Naive thymus-derived CD4-positive, alpha-beta T cell (primary cell): ENCODE measurements at regions of chr2 and their contacts with region 1.

Region 1: GRCh38 chr2:99141110-99142108 is at the start of gene C2orf15:
- DNase-seq: peak; percentile 89 to 98 (median 96)
- ATAC-seq: peak; percentile 95
- H3K4me3 ChIP-seq: peak within 1 kb of the TSS; percentile 97
- H3K4me3 Mint-ChIP-seq: peak within 1 kb of the TSS; percentile 90 to 99 (median 97)
- H3K27ac ChIP-seq: peak within 1 kb of the TSS; percentile 82
- H3K27ac Mint-ChIP-seq: peak within 1 kb of the TSS; percentile 92 to 99 (median 98)
- H3K4me1 ChIP-seq: peaks cover 13% of the 10 kb centered on the region in 2 donors
- H3K4me1 Mint-ChIP-seq: peaks cover 0 to 31% (median 25%) of the 10 kb centered on the region in 7 donors
- H3K27me3 ChIP-seq: no peaks in the 10 kb centered on the region
- H3K27me3 Mint-ChIP-seq: peaks cover 0 to 41% (median 0%) of the 10 kb centered on the region in 5 donors
- total RNA-seq, gene C2orf15: 0.48 to 3.8 (median 3.1) TPM

Region 2: DNA sequence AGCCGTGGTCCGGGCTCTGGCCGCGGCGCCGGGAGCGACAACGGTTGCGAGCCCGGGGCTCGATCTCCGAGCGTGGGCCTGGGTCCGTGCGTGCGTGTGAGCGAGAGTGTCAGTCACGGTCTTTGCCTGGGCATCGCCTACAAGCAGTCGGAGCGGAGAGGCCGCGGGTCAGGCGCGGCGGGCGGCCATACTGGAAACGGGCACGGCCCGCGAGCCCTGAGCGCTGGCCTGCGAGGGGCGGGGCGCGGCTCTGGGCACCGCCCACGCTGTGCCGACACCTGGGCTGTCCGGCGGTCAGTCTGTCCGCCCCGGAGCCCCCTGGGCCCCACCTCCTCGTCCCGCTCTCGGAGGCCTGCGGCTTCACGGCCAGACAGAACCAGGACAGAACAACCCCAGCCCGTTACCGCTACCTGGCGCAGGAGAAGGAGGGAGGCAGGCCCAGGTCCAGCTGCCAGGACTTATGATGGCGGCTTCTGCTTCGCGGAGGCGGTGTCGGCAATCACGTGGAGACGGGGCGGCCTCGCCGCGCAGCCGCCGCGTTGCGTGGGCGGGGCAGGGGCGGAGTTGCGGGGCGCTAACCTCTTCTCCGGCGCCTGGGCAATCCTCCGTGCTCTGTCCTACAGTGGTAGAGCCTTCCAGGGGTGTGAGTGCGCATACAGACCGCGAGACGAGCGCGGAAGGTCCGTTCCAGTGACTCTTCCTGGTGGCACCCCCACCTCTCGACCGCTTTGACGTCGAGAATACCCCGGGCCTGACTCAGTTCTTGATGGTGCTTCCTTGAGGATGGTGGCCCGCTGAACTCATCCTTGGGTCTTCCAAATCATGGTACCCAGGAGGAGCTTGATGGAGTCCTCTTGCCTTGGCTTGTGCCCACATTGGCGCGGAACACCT is 1145.4 kb before region 1 on chr2 and contains the start of gene TMEM131:
- CTCF ChIA-PET with region 1: no interaction called
- POLR2A ChIA-PET with region 1: no interaction called
- intact Hi-C with region 1: loop called in 1 of 2 experiments (anchors 1 kb)
- DNase-seq: peak; percentile 89 to 98 (median 95)
- ATAC-seq: peak; percentile 93
- H3K4me3 ChIP-seq: peak within 1 kb of the TSS; percentile 90
- H3K4me3 Mint-ChIP-seq: peak within 1 kb of the TSS; percentile 85 to 98 (median 96)
- H3K27ac ChIP-seq: peak within 1 kb of the TSS; percentile 96
- H3K27ac Mint-ChIP-seq: peak within 1 kb of the TSS; percentile 86 to 95 (median 93)
- H3K4me1 ChIP-seq: peaks cover 14 to 17% of the 10 kb centered on the region in 2 donors
- H3K4me1 Mint-ChIP-seq: peaks cover 20 to 40% (median 38%) of the 10 kb centered on the region in 7 donors
- H3K27me3 ChIP-seq: no peaks in the 10 kb centered on the region
- H3K27me3 Mint-ChIP-seq: peaks cover 0 to 4% (median 0%) of the 10 kb centered on the region in 5 donors
- total RNA-seq, gene TMEM131: 39.7 to 46.4 (median 43.6) TPM

Region 3: GRCh38 chr2:98608116-98608999 is 533.1 kb before region 1 on chr2 and contains the starts of genes COA5 and UNC50:
- CTCF ChIA-PET with region 1: no interaction called
- POLR2A ChIA-PET with region 1: no interaction called
- intact Hi-C with region 1: loop called in 1 of 2 experiments (anchors 10 kb)
- DNase-seq: peak; percentile 82 to 94 (median 87)
- ATAC-seq: peak; percentile 93
- H3K4me3 ChIP-seq: peak within 1 kb of the TSS; percentile 94
- H3K4me3 Mint-ChIP-seq: peak within 1 kb of the TSS; percentile 82 to 97 (median 90)
- H3K27ac ChIP-seq: peak within 1 kb of the TSS; percentile 97
- H3K27ac Mint-ChIP-seq: peak within 1 kb of the TSS; percentile 81 to 97 (median 92)
- H3K4me1 ChIP-seq: peaks cover 39 to 48% of the 10 kb centered on the region in 2 donors
- H3K4me1 Mint-ChIP-seq: peaks cover 51 to 82% (median 70%) of the 10 kb centered on the region in 7 donors
- H3K27me3 ChIP-seq: no peaks in the 10 kb centered on the region
- H3K27me3 Mint-ChIP-seq: no peaks in the 10 kb centered on the region
- total RNA-seq, gene COA5: 23.8 to 55.2 (median 29.2) TPM
- total RNA-seq, gene UNC50: 22.2 to 41.3 (median 29.9) TPM

Region 4: DNA sequence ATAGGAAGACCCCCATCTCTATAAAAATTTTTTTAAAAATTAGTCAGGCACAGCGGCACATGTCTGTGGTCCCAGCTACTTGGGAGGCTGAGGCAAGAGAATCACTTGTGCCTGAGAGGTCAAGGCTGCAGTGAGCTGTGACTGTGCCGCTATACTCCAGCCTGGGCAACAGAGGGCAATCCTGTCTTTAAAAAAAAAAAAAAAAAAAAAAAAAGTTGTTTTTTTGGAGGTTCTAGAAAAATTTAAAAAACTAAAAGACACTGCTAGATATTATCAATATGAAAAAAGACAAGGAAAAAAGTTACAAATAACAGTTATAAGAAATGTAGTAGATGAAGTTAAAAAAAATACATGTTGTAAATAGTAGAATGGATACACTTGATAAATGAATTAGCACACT is 56.0 kb before region 1 on chr2:
- CTCF ChIA-PET with region 1: interaction called, 3 read pairs
- POLR2A ChIA-PET with region 1: no interaction called
- intact Hi-C with region 1: loop called in 1 of 2 experiments (anchors 5 kb)
- DNase-seq: peak in 4 of 9 donors; percentile 1 to 7 (median 4)
- ATAC-seq: no peak
- H3K4me3 ChIP-seq: no peak overlapping the region
- H3K4me3 Mint-ChIP-seq: no peak overlapping the region
- H3K27ac ChIP-seq: no peak overlapping the region
- H3K27ac Mint-ChIP-seq: no peak overlapping the region
- H3K4me1 ChIP-seq: peaks cover 0 to 7% of the 10 kb centered on the region in 2 donors
- H3K4me1 Mint-ChIP-seq: peaks cover 0 to 6% (median 4%) of the 10 kb centered on the region in 7 donors
- H3K27me3 ChIP-seq: no peaks in the 10 kb centered on the region
- H3K27me3 Mint-ChIP-seq: peaks cover 0 to 28% (median 6%) of the 10 kb centered on the region in 5 donors

Region 5: GRCh38 chr2:99101697-99102096 is 39.7 kb before region 1 on chr2:
- CTCF ChIA-PET with region 1: no interaction called
- POLR2A ChIA-PET with region 1: no interaction called
- intact Hi-C with region 1: loop called in 1 of 2 experiments (anchors 5 kb)
- DNase-seq: no peak
- ATAC-seq: no peak
- H3K4me3 ChIP-seq: no peak overlapping the region
- H3K4me3 Mint-ChIP-seq: no peak overlapping the region
- H3K27ac ChIP-seq: no peak overlapping the region
- H3K27ac Mint-ChIP-seq: peak overlapping the region in 7 of 9 donors; percentile 5 to 63 (median 38)
- H3K4me1 ChIP-seq: no peaks in the 10 kb centered on the region
- H3K4me1 Mint-ChIP-seq: peaks cover 0 to 9% (median 8%) of the 10 kb centered on the region in 7 donors
- H3K27me3 ChIP-seq: no peaks in the 10 kb centered on the region
- H3K27me3 Mint-ChIP-seq: no peaks in the 10 kb centered on the region

Region 6: GRCh38 chr2:99112617-99113016 is 28.8 kb before region 1 on chr2:
- CTCF ChIA-PET with region 1: no interaction called
- POLR2A ChIA-PET with region 1: no interaction called
- intact Hi-C with region 1: loop called in 1 of 2 experiments (anchors 2 kb)
- DNase-seq: no peak
- ATAC-seq: no peak
- H3K4me3 ChIP-seq: no peak overlapping the region
- H3K4me3 Mint-ChIP-seq: no peak overlapping the region
- H3K27ac ChIP-seq: no peak overlapping the region
- H3K27ac Mint-ChIP-seq: no peak overlapping the region
- H3K4me1 ChIP-seq: no peaks in the 10 kb centered on the region
- H3K4me1 Mint-ChIP-seq: no peaks in the 10 kb centered on the region
- H3K27me3 ChIP-seq: no peaks in the 10 kb centered on the region
- H3K27me3 Mint-ChIP-seq: peaks cover 0 to 2% (median 0%) of the 10 kb centered on the region in 5 donors

Region 7: GRCh38 chr2:99154643-99155536 is 13.5 kb after region 1 on chr2 and contains the starts of genes LIPT1 and TSGA10:
- CTCF ChIA-PET with region 1: interaction called, 3 read pairs
- POLR2A ChIA-PET with region 1: interaction called, 101 read pairs
- intact Hi-C with region 1: loop called (anchors 1 kb)
- DNase-seq: peak; percentile 80 to 95 (median 92)
- ATAC-seq: peak; percentile 98
- H3K4me3 ChIP-seq: peak within 1 kb of the TSS; percentile 83
- H3K4me3 Mint-ChIP-seq: peak within 1 kb of the TSS in 1 of 10 donors; percentile 93
- H3K27ac ChIP-seq: peak within 1 kb of the TSS; percentile 92
- H3K27ac Mint-ChIP-seq: peak within 1 kb of the TSS in 2 of 9 donors; percentile 96 to 97
- H3K4me1 ChIP-seq: peaks cover 15 to 18% of the 10 kb centered on the region in 2 donors
- H3K4me1 Mint-ChIP-seq: peaks cover 25 to 57% (median 42%) of the 10 kb centered on the region in 7 donors
- H3K27me3 ChIP-seq: no peaks in the 10 kb centered on the region
- H3K27me3 Mint-ChIP-seq: no peaks in the 10 kb centered on the region
- total RNA-seq, gene LIPT1: 7.7 to 24.1 (median 15.9) TPM
- total RNA-seq, gene TSGA10: 3.5 to 31.7 (median 12.6) TPM

Region 8: GRCh38 chr2:99201959-99202678 is 60.7 kb after region 1 on chr2:
- CTCF ChIA-PET with region 1: no interaction called
- POLR2A ChIA-PET with region 1: no interaction called
- intact Hi-C with region 1: no loop called
- DNase-seq: no peak
- ATAC-seq: no peak
- H3K4me3 ChIP-seq: no peak overlapping the region
- H3K4me3 Mint-ChIP-seq: no peak overlapping the region
- H3K27ac ChIP-seq: no peak overlapping the region
- H3K27ac Mint-ChIP-seq: peak overlapping the region in 4 of 9 donors; percentile 4 to 88 (median 44)
- H3K4me1 ChIP-seq: no peaks in the 10 kb centered on the region
- H3K4me1 Mint-ChIP-seq: peaks cover 0 to 3% (median 0%) of the 10 kb centered on the region in 7 donors
- H3K27me3 ChIP-seq: no peaks in the 10 kb centered on the region
- H3K27me3 Mint-ChIP-seq: no peaks in the 10 kb centered on the region

Region 9: DNA sequence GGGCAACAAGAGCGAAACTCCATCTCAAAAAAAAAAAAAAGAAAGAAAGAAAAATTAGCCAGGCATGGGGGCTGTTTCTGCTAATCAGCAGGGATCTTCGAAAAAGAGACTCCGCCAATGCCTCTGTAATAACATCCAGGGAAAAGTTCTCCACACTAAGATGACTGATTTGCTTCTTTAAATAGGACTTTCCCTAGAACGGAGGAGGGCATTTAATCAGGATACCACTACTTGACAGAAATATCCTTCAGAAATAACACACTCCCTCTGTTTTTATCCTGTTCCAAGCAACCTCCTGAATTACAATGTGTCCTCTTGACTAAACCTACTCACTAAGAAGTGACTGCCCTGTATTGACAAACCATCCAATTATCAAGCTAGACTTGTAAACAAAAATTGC is 326.7 kb after region 1 on chr2:
- CTCF ChIA-PET with region 1: no interaction called
- POLR2A ChIA-PET with region 1: no interaction called
- intact Hi-C with region 1: no loop called
- DNase-seq: no peak
- ATAC-seq: no peak
- H3K4me3 ChIP-seq: no peak overlapping the region
- H3K4me3 Mint-ChIP-seq: no peak overlapping the region
- H3K27ac ChIP-seq: no peak overlapping the region
- H3K27ac Mint-ChIP-seq: no peak overlapping the region
- H3K4me1 ChIP-seq: no peaks in the 10 kb centered on the region
- H3K4me1 Mint-ChIP-seq: peaks cover 9 to 67% (median 58%) of the 10 kb centered on the region in 7 donors
- H3K27me3 ChIP-seq: no peaks in the 10 kb centered on the region
- H3K27me3 Mint-ChIP-seq: no peaks in the 10 kb centered on the region